ENCODE measurements at regions of chr2 and their contacts with region 1.

Region 1: GRCh38 chr2:113080134-113080533 is 12.4 kb downstream of the IL1F10 start:
- DNase-seq: peak; percentile 77
- H3K4me3 Mint-ChIP-seq: no peak overlapping the region
- H3K27ac Mint-ChIP-seq: peak overlapping the region; percentile 95
- H3K4me1 Mint-ChIP-seq: peaks cover 54% of the 10 kb centered on the region
- H3K27me3 Mint-ChIP-seq: no peaks in the 10 kb centered on the region
- CTCF ChIP-seq: peak; percentile 75

Region 2: GRCh38 chr2:112579241-112579640 is 500.9 kb before region 1 on chr2:
- CTCF ChIA-PET with region 1: no interaction called
- intact Hi-C with region 1: no loop called
- DNase-seq: no peak
- H3K4me3 Mint-ChIP-seq: no peak overlapping the region
- H3K27ac Mint-ChIP-seq: no peak overlapping the region
- H3K4me1 Mint-ChIP-seq: peaks cover 7% of the 10 kb centered on the region
- H3K27me3 Mint-ChIP-seq: no peaks in the 10 kb centered on the region
- CTCF ChIP-seq: no peak

Region 3: GRCh38 chr2:113041871-113042508 is 38.1 kb before region 1 on chr2:
- CTCF ChIA-PET with region 1: interaction called, 3 read pairs
- intact Hi-C with region 1: loop called (anchors 2 kb)
- DNase-seq: peak; percentile 35
- H3K4me3 Mint-ChIP-seq: no peak overlapping the region
- H3K27ac Mint-ChIP-seq: no peak overlapping the region
- H3K4me1 Mint-ChIP-seq: peaks cover 28% of the 10 kb centered on the region
- H3K27me3 Mint-ChIP-seq: no peaks in the 10 kb centered on the region
- CTCF ChIP-seq: peak; percentile 34

Region 4: GRCh38 chr2:113117541-113118262 is 37.6 kb after region 1 on chr2:
- CTCF ChIA-PET with region 1: interaction called, 16 read pairs
- intact Hi-C with region 1: loop called (anchors 2 kb)
- DNase-seq: peak; percentile 90
- H3K4me3 Mint-ChIP-seq: peak overlapping the region; percentile 70
- H3K27ac Mint-ChIP-seq: peak overlapping the region; percentile 92
- H3K4me1 Mint-ChIP-seq: peaks cover 50% of the 10 kb centered on the region
- H3K27me3 Mint-ChIP-seq: no peaks in the 10 kb centered on the region
- CTCF ChIP-seq: no peak

Region 5: DNA sequence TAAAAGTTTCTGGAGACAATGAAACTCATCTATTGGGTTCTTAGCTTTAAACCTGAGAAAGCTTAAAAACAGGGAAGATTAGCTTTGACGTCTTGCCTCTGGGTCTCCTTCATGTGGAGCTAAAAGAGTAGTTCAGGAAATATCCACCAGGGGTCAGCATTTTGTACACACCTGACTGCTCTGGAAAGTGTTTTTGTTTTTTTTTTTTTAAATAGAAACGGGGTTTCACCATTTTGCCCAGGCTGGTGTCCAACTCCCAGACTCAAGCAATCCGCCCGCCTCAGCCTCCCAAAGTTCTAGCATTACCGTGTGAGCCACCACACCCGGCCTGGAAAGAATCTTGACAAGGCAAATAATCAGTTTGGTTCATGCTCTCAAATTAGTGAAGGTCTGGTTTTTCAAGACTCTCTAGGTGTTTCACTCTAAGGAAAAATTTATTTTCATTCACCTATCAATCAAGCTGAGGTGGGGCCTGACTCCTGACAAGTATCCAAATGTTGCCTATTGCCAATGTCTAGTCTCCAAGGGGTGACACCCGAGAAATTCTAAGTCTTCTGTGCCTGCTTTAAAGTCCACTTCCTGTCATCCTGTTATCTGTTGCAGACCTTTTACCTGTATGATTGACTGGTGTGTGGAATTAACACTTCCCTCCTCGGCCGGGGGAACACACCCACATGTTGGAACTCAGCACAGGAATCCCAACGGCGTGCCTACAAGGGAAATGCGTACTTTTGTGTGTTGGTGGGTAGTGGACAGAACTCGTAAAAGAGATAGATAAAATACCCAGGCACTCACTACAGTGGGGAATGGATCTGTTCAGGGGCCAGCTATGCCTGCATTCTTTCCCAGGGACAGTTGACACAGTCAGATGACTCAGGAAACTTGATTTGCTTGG is 58.5 kb after region 1 on chr2:
- CTCF ChIA-PET with region 1: interaction called, 17 read pairs
- intact Hi-C with region 1: loop called (anchors 5 kb)
- DNase-seq: peak; percentile 77
- H3K4me3 Mint-ChIP-seq: no peak overlapping the region
- H3K27ac Mint-ChIP-seq: no peak overlapping the region
- H3K4me1 Mint-ChIP-seq: peaks cover 20% of the 10 kb centered on the region
- H3K27me3 Mint-ChIP-seq: no peaks in the 10 kb centered on the region
- CTCF ChIP-seq: peak; percentile 58

Region 6: GRCh38 chr2:113198790-113199612 is 118.9 kb after region 1 on chr2:
- CTCF ChIA-PET with region 1: interaction called, 37 read pairs
- intact Hi-C with region 1: loop called (anchors 2 kb)
- DNase-seq: peak; percentile 94
- H3K4me3 Mint-ChIP-seq: peak overlapping the region; percentile 69
- H3K27ac Mint-ChIP-seq: peak overlapping the region; percentile 61
- H3K4me1 Mint-ChIP-seq: no peaks in the 10 kb centered on the region
- H3K27me3 Mint-ChIP-seq: no peaks in the 10 kb centered on the region
- CTCF ChIP-seq: peak; percentile 97

Region 7: DNA sequence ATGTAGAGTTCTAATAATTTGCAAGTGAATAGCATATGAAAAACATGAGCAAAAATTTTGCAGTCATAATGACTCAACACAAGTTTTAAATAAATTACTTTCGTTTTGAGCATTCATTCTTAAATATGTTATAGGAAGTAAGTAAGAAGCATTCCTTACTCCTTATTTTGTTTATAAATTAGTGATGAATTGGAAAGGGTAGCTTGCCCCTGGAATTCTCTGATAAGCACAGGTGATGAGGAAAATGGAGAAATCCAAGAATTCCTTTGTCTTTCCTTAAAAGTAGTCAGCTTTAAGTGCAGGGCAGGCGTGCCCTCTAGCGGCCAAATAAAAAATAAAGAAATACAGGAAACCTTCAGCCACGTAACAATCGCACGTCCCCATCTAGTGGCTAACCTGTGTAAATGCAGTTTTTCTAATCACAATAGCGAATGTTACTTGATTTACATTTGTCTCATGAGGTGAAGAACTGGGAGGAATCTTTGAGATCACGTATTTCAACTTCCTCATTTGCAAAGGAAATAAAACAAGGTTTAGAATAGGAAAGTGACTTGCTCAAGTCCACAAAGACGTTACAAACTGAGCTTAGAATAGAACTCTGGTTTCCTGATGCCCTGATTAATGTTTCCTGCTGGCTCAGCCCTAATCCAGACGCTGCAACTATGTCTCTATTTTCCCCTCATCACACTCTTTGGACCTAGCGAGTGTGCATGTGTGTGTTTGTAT is 310.2 kb after region 1 on chr2:
- CTCF ChIA-PET with region 1: interaction called, 5 read pairs
- intact Hi-C with region 1: loop called (anchors 5 kb)
- DNase-seq: peak; percentile 77
- H3K4me3 Mint-ChIP-seq: no peak overlapping the region
- H3K27ac Mint-ChIP-seq: peak overlapping the region; percentile 22
- H3K4me1 Mint-ChIP-seq: no peaks in the 10 kb centered on the region
- H3K27me3 Mint-ChIP-seq: no peaks in the 10 kb centered on the region
- CTCF ChIP-seq: peak; percentile 92

Measured in Calu3 (cell line).